PC-3 (cell line): ENCODE measurements at regions of chr3 and their contacts with region 1.

Region 1: DNA sequence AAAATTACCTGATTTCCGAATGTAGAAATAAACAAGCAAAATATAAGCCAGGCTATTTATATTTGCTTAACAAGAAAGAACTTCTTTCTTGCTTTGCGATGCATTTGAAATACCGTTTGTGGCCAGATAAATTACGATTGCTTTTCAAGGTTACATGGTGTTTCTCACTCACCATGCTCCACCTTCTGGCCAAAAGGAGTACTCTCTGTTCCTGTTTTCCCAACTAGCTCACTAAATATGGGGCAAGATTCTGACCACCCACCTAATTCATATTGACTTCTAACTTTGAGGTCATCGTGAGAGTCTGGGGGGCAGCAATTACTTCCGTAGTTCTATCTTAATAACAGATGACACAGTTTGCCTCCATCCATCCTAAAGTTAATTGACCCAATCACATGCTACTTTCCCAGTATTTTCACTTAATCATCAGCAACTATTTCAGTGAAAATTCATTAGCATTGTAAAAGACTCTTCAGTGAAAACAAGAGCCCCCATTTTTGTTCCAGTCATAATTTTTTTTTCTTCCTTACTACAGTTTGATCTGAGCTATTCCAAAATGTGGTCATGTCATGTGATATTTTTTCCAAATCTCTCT is 25.9 kb downstream of the ACP3 start:
- DNase-seq: peak; percentile 66
- ATAC-seq: peak; percentile 31; the same call in 1 of the 2 replicates
- H3K4me3 ChIP-seq: no peak overlapping the region
- H3K27ac ChIP-seq: no peak overlapping the region
- H3K4me1 ChIP-seq: peaks cover 37% of the 10 kb centered on the region
- H3K27me3 ChIP-seq: no peaks in the 10 kb centered on the region
- CTCF ChIP-seq: peak; percentile 82

Region 2: DNA sequence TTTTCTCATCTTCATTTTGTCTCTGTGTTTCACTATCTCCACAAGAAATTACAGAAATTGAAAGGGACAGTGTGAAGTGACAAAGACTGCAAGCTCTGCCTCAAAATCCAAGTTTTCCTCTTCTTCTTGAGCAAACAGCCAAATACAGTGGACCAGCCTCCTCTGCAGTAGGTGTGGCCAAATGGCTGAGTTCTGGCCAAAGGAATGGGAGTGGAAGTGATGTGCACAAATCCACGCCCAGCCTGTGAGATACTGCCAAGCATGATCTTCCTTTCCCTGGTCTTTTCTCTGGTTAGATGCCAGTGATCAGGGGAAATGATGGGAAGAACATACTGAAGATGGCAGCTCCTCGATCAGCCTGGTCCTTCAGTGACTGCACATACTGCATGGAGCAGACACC is 197.3 kb before region 1 on chr3:
- CTCF ChIA-PET with region 1: no interaction called
- POLR2A ChIA-PET with region 1: no interaction called
- intact Hi-C with region 1: no loop called
- DNase-seq: no peak
- ATAC-seq: peak; percentile 42
- H3K4me3 ChIP-seq: no peak overlapping the region
- H3K27ac ChIP-seq: no peak overlapping the region
- H3K4me1 ChIP-seq: no peaks in the 10 kb centered on the region
- H3K27me3 ChIP-seq: no peaks in the 10 kb centered on the region
- CTCF ChIP-seq: no peak

Region 3: DNA sequence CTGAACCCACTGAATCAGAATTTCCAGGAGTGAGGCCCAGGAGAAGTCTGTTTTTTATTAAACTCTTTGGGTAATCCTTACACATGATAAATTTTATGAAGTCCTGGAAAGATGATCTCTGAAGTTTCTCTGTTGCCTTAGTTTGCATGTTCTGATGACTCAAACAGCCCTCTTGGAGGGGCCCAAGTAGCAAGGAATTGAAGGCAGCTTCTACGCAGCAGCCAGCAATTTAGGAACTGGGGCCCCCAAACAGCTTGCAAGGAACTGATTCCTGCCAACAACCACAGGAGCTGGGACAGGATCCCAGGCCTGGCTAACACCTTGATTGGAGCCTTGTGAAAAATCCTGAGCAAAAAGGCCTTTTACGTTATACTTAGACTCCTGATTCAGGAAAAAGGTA is 31.3 kb before region 1 on chr3:
- CTCF ChIA-PET with region 1: interaction called, 10 read pairs
- POLR2A ChIA-PET with region 1: no interaction called
- intact Hi-C with region 1: loop called (anchors 2 kb)
- DNase-seq: no peak
- ATAC-seq: no peak
- H3K4me3 ChIP-seq: no peak overlapping the region
- H3K27ac ChIP-seq: no peak overlapping the region
- H3K4me1 ChIP-seq: peaks cover 13% of the 10 kb centered on the region
- H3K27me3 ChIP-seq: no peaks in the 10 kb centered on the region
- CTCF ChIP-seq: no peak

Region 4: GRCh38 chr3:132317229-132317948 is 25.7 kb before region 1 on chr3 and contains the start of gene ACP3:
- CTCF ChIA-PET with region 1: interaction called, 19 read pairs
- POLR2A ChIA-PET with region 1: interaction called, 3 read pairs
- intact Hi-C with region 1: loop called (anchors 2 kb)
- DNase-seq: peak; percentile 95
- ATAC-seq: peak; percentile 69
- H3K4me3 ChIP-seq: peak within 1 kb of the TSS; percentile 58
- H3K27ac ChIP-seq: peak within 1 kb of the TSS; percentile 98
- H3K4me1 ChIP-seq: peaks cover 36% of the 10 kb centered on the region
- H3K27me3 ChIP-seq: no peaks in the 10 kb centered on the region
- CTCF ChIP-seq: no peak
- total RNA-seq, gene ACP3: 0.15 and 0.75 TPM in 2 replicates

Region 5: GRCh38 chr3:132535575-132536441 is 192.7 kb after region 1 on chr3:
- CTCF ChIA-PET with region 1: no interaction called
- POLR2A ChIA-PET with region 1: no interaction called
- intact Hi-C with region 1: loop called (anchors 10 kb)
- DNase-seq: peak; percentile 71
- ATAC-seq: peak; percentile 83
- H3K4me3 ChIP-seq: no peak overlapping the region
- H3K27ac ChIP-seq: no peak overlapping the region
- H3K4me1 ChIP-seq: no peaks in the 10 kb centered on the region
- H3K27me3 ChIP-seq: no peaks in the 10 kb centered on the region
- CTCF ChIP-seq: peak; percentile 65